ENCODE measurements at regions of chr17 and their contacts with region 1.

Region 1: GRCh38 chr17:63773381-63774140 is at the start of gene CCDC47:
- DNase-seq: peak; percentile 95 to 99 (median 99)
- H3K4me3 ChIP-seq: peak within 1 kb of the TSS; percentile 98
- H3K4me3 Mint-ChIP-seq: peak within 1 kb of the TSS; percentile 92 to 100 (median 96)
- H3K27ac ChIP-seq: peak within 1 kb of the TSS; percentile 99
- H3K27ac Mint-ChIP-seq: peak within 1 kb of the TSS; percentile 96 to 100 (median 99)
- H3K4me1 ChIP-seq: peaks cover 52% of the 10 kb centered on the region
- H3K4me1 Mint-ChIP-seq: peaks cover 53 to 87% (median 70%) of the 10 kb centered on the region in 3 donors
- H3K27me3 ChIP-seq: no peaks in the 10 kb centered on the region
- H3K27me3 Mint-ChIP-seq: peaks cover 0 to 3% of the 10 kb centered on the region in 2 donors
- total RNA-seq, gene CCDC47: 93.0 to 94.5 TPM

Region 2: GRCh38 chr17:63697341-63698286 is 75.9 kb before region 1 on chr17:
- CTCF ChIA-PET with region 1: interaction called, 18 read pairs
- POLR2A ChIA-PET with region 1: interaction called, 95 read pairs
- DNase-seq: peak; percentile 76 to 92 (median 84)
- H3K4me3 ChIP-seq: peak overlapping the region; percentile 95
- H3K4me3 Mint-ChIP-seq: peak overlapping the region; percentile 98 to 100 (median 98)
- H3K27ac ChIP-seq: peak overlapping the region; percentile 74
- H3K27ac Mint-ChIP-seq: peak overlapping the region; percentile 94 to 99 (median 98)
- H3K4me1 ChIP-seq: peaks cover 50% of the 10 kb centered on the region
- H3K4me1 Mint-ChIP-seq: peaks cover 61 to 71% (median 62%) of the 10 kb centered on the region in 3 donors
- H3K27me3 ChIP-seq: no peaks in the 10 kb centered on the region
- H3K27me3 Mint-ChIP-seq: peaks cover 0 to 3% of the 10 kb centered on the region in 2 donors

Region 3: DNA sequence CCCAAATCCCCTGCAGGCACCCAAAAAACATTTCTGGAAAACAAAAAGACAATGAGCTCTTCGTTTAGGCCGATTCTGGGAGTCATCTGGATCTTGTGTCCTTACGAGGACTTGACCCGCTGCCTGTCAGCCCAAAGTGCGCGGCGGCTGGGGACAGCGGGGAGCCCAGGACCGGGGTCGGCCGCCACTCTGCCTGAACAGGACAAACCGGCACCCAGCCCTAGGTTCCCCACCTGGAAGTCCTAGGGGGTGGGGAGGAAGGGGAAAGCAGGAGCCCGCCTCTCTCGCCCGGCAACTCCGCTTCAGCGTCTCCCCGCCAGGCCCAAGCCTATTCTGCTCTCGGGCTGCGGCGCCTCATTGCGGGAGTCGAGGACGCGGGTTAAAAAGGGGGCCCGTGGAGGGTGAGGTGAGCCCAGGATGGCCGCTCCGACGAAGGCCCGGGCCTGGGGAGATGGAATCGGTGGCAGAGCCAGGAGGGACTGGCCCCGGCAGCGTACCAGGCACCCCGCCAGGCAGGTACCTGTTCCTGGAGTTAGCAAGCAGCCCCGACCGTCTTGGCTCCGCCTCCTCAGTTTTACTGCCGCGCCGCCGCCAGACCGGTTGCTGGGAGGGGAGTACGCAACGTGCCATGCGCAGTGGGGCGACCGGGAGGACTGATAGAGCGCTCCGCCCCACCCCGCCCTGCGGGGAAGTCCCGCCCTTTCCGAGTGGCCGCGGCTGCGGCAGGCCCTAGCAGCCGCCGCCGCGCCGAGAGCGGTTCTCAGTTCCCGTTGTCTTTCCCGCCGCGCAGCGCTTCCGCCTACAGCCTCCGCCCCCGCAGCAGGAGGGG is 32.1 kb before region 1 on chr17 and contains the start of gene STRADA:
- CTCF ChIA-PET with region 1: interaction called, 7 read pairs
- POLR2A ChIA-PET with region 1: interaction called, 54 read pairs
- DNase-seq: peak; percentile 98 to 99 (median 98)
- H3K4me3 ChIP-seq: peak within 1 kb of the TSS; percentile 86
- H3K4me3 Mint-ChIP-seq: peak within 1 kb of the TSS; percentile 86 to 96 (median 90)
- H3K27ac ChIP-seq: peak within 1 kb of the TSS; percentile 92
- H3K27ac Mint-ChIP-seq: peak within 1 kb of the TSS; percentile 93 to 98 (median 94)
- H3K4me1 ChIP-seq: peaks cover 13% of the 10 kb centered on the region
- H3K4me1 Mint-ChIP-seq: peaks cover 17 to 25% (median 21%) of the 10 kb centered on the region in 3 donors
- H3K27me3 ChIP-seq: no peaks in the 10 kb centered on the region
- H3K27me3 Mint-ChIP-seq: peaks cover 0 to 2% of the 10 kb centered on the region in 2 donors
- total RNA-seq, gene STRADA: 56.7 to 57.2 TPM

Region 4: DNA sequence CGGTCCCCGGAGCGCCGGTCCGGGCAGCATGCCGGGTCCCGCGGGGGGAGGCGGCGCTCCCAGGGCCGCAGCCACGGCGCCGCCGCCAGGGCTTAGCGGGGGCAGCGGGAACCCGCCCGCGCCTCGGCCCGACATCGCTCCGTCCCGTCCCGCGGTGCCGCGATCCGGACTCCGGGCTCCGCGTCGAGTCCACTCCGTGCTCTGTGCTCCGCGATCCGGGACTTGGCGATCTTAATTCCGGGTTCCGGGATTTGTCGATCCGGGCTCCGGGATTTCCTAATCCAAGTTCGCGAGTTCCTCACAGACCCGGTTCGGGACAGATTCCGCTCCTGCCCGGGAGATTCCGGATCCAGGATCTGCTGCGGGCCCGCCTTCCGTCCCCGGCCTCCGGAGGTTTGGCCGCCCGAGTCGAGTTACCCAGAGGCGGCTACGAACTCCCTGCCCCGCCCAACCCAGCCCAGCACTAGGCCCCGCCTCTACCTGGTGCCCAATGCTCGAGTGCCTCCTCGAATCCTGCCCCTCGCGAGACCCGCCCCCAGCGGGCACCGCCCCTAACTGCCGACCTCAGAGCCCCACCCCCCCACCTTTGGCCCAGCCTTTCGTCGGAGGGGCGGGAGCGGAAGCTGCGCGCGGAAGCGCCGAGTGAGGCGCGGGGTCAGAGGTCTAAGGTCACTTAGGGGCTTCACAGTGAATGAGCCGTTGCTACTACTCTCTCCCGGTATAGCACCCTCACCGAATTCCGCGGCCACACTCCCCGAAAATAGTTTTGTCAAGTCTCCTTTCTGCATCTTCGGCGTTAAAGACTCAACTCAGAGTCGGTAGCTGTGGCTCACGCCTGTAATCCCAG is 69.2 kb after region 1 on chr17 and contains the start of gene SMARCD2:
- CTCF ChIA-PET with region 1: no interaction called
- POLR2A ChIA-PET with region 1: interaction called, 14 read pairs
- DNase-seq: peak; percentile 97 to 100 (median 98)
- H3K4me3 ChIP-seq: peak within 1 kb of the TSS; percentile 83
- H3K4me3 Mint-ChIP-seq: peak within 1 kb of the TSS; percentile 91 to 97 (median 94)
- H3K27ac ChIP-seq: peak within 1 kb of the TSS; percentile 88
- H3K27ac Mint-ChIP-seq: peak within 1 kb of the TSS; percentile 85 to 97 (median 94)
- H3K4me1 ChIP-seq: peaks cover 44% of the 10 kb centered on the region
- H3K4me1 Mint-ChIP-seq: peaks cover 36 to 47% (median 47%) of the 10 kb centered on the region in 3 donors
- H3K27me3 ChIP-seq: no peaks in the 10 kb centered on the region
- H3K27me3 Mint-ChIP-seq: no peaks in the 10 kb centered on the region
- total RNA-seq, gene SMARCD2: 96.8 to 107 TPM